Activated CD4-positive, alpha-beta memory T cell treated with anti-CD3 and anti-CD28 coated beads for 36 hours (primary cell): ENCODE measurements at regions of chr12 and their contacts with region 1.

Region 1: GRCh38 chr12:109052414-109053323 is at the start of gene USP30:
- DNase-seq: peak; percentile 89
- H3K4me3 Mint-ChIP-seq: peak within 1 kb of the TSS; percentile 89
- H3K27ac Mint-ChIP-seq: peak within 1 kb of the TSS; percentile 97
- H3K4me1 Mint-ChIP-seq: peaks cover 15% of the 10 kb centered on the region
- H3K27me3 Mint-ChIP-seq: no peaks in the 10 kb centered on the region
- total RNA-seq, gene USP30: 11.4 to 11.8 TPM

Region 2: DNA sequence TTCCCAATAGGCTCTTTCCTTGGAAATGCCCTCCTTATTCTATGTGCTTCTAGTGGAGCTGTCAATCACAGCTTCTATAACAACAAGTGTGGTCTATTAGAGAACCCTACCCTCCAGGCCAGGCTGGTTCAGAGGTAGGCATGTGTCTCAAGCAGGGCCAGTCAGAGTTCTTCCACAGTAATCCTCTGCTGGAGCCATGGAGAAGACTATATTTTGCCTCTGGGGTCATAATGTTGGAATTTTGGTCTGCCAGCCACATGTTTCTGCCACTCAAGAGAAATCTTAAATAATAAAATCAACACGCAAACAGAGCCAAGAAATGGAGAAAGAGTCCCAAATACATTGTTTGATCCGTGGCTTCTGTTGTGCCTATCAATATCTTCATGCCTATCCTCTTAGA is 561.4 kb before region 1 on chr12:
- CTCF ChIA-PET with region 1: no interaction called
- POLR2A ChIA-PET with region 1: no interaction called
- intact Hi-C with region 1: no loop called
- DNase-seq: no peak
- H3K4me3 Mint-ChIP-seq: no peak overlapping the region
- H3K27ac Mint-ChIP-seq: no peak overlapping the region
- H3K4me1 Mint-ChIP-seq: no peaks in the 10 kb centered on the region
- H3K27me3 Mint-ChIP-seq: peaks cover 29% of the 10 kb centered on the region

Region 3: DNA sequence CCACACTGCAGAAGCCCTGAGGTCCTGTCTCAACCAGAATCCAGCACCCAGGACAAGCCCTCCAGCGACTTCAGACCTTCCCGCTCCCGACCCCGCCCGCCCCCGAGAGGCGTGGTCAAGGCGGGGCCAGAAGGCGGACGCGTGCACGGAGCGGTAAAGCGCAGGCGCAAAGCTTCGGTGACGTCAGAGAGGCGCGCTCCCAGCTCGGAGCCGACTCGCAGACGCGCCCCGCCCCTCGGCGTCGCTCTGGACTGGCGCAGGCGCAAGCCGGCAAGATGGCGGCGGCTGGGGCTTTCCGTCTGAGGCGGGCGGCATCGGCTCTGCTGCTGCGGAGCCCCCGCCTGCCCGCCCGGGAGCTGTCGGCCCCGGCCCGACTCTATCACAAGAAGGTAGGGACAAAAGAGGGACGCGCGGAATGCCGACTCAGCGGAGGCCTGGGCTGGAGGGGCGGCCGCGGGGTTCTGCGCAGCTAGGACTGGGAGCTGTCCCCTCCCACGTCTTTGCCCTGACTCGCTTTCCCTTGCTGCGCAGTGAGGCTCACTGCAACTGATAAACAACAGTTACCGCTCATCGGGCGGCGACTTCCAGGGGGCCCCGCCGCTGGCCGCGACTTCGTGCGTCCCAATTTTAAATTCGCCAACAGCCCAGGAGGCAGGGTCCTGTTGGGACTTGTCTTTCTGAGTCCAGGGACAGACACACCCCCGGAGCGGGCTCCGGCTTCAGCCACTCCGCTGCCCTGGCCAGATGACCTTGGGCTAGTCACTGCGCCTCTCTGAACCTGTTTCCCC is 490.1 kb before region 1 on chr12 and contains the start of gene ISCU:
- CTCF ChIA-PET with region 1: no interaction called
- POLR2A ChIA-PET with region 1: interaction called, 5 read pairs
- intact Hi-C with region 1: loop called (anchors 2 kb)
- DNase-seq: peak; percentile 99
- H3K4me3 Mint-ChIP-seq: peak within 1 kb of the TSS; percentile 100
- H3K27ac Mint-ChIP-seq: peak within 1 kb of the TSS; percentile 99
- H3K4me1 Mint-ChIP-seq: peaks cover 57% of the 10 kb centered on the region
- H3K27me3 Mint-ChIP-seq: no peaks in the 10 kb centered on the region
- total RNA-seq, gene ISCU: 88.6 to 94.3 TPM

Region 4: DNA sequence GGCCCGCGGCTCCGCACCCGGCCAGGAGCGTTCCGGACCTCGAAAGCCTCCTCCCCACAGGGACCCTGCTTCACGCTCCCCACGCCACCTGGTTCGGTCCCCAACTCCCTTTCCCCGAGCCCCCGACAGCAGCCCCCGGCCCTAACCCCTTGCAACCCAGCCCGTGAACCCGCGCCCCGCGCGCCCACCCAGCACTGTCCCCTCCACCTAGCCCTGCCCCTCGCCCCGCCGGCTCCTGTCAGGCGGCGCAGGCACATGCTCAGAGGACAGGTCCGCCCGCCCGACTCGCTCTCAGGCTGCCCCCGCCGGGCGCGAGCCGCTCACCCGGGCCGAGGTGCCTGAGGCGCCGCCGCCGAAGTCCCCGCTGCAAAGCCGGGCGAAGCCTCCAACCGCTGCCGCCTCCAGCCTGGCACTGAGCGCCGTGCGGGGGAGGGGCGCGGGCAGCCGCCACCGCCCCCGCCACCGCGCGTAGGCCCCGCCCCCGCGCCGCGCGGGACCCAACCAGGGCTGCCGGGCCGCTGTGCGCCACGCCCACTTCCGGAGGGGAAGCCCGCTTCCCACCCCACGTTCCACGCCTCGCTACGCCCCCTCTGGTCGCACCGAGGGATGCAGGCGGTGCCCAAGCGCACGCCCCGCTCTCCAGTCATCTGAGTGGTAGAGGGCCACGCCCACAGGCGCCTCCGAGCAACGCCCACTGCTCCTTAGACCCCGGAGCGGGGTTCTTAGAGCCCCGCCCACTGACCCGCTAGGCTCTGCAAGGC is 321.4 kb before region 1 on chr12 and contains the start of gene CORO1C:
- CTCF ChIA-PET with region 1: no interaction called
- POLR2A ChIA-PET with region 1: no interaction called
- intact Hi-C with region 1: loop called (anchors 1 kb)
- DNase-seq: peak; percentile 97
- H3K4me3 Mint-ChIP-seq: peak within 1 kb of the TSS; percentile 91
- H3K27ac Mint-ChIP-seq: peak within 1 kb of the TSS; percentile 91
- H3K4me1 Mint-ChIP-seq: peaks cover 34% of the 10 kb centered on the region
- H3K27me3 Mint-ChIP-seq: no peaks in the 10 kb centered on the region
- total RNA-seq, gene CORO1C: 62.1 to 70.9 TPM